PC-9 (cell line): ENCODE measurements at regions of chr3 and their contacts with region 1.

Region 1: DNA sequence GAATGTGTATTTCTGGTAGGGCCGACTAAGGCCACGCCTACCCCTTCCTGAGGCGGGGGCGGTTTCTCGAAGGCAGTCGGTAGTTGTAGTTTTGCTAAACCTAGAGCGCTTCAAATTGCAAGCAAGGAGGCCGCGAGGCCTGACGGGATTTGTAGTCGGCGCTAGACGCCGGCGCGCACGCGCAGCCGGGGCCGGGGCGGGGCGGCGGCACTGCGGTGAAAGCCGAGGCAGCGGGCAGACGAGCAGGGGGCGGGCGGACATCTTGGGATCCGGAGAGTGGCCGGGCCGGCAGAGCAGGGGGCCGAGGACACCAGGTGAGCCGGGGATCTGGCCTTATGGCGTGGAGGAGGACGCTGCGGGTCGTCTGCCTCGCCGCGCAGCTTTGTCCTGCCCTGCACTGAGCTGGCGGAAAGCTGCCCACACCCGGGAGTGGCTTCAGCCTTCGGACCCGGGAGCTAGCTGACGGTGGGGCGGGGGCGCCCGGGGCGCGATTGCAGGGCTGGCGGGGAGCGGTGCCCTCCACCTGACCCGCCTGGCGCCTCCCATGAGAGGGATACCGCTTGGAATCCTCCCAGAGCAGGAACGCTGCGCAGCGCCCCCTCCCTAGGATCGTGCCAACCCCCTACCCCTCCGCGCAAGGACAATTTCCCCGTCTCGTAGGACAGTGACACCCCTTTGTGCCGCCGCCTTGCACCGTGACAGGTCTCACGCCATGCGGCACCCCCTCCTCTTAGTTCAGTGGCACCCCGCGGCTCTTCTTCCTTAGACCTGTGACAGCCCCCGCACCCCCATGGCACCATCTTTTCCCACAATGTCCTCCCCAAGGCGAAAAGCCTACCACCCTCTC is at the start of gene AP2M1:
- DNase-seq: peak; percentile 99 to 100
- H3K4me3 ChIP-seq: peak within 1 kb of the TSS; percentile 91
- H3K27ac ChIP-seq: peak within 1 kb of the TSS; percentile 32
- H3K4me1 ChIP-seq: peaks cover 20% of the 10 kb centered on the region
- H3K27me3 ChIP-seq: no peaks in the 10 kb centered on the region
- CTCF ChIP-seq: no peak
- total RNA-seq, gene AP2M1: 586 and 606 TPM in 2 replicates

Region 2: GRCh38 chr3:184135149-184135910 is 39.5 kb before region 1 on chr3 and contains the start of gene EIF2B5:
- CTCF ChIA-PET with region 1: interaction called, 5 read pairs
- POLR2A ChIA-PET with region 1: no interaction called
- intact Hi-C with region 1: loop called (anchors 1 kb)
- DNase-seq: peak; percentile 87 to 88
- H3K4me3 ChIP-seq: peak within 1 kb of the TSS; percentile 80
- H3K27ac ChIP-seq: peak within 1 kb of the TSS; percentile 79
- H3K4me1 ChIP-seq: peaks cover 25% of the 10 kb centered on the region
- H3K27me3 ChIP-seq: no peaks in the 10 kb centered on the region
- CTCF ChIP-seq: peak; percentile 48
- total RNA-seq, gene EIF2B5: 45.7 and 54.1 TPM in 2 replicates

Region 3: DNA sequence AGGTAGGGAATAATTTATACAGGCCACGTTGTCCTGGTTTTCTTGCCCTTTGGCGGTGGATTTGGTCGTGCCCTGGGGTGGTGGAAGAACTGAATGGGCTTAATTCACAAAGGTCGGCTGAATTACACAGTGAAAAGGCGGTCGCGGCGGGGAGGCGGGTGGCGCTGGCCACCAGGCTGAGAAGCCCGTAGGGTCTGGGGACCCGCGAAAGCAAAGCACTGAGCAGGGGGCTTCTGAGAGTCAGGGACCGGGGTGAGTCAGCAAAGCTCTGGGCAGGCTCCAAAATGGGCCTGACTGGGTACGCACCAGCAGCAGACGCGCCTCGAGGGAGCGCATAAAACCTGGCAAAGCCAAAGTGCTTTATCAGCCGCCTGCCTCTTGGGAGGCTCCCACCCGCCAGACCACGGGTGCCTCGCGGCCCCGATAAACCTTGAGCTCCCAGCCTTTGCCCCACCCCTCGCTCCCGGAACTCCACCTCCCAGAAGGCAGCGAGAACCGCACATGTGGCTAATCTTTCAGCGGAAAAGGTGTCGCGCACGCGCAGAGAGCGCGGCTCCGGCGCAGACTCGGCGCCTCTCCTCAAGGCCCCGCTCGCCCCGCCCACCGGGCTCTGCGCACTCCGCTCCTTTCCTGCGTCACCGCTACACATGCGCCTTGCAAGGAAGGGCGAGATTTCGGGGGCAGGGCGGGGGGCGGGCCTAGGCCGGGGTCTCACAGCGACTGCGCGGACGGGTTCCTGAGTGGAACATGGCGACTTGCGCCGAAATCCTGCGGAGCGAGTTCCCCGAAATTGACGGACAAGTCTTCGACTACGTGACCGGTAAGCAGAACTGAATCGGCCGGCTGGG is 10.8 kb after region 1 on chr3 and contains the start of gene ABCF3:
- CTCF ChIA-PET with region 1: interaction called, 4 read pairs
- POLR2A ChIA-PET with region 1: interaction called, 9 read pairs
- intact Hi-C with region 1: loop called (anchors 1 kb)
- DNase-seq: peak; percentile 97 to 100
- H3K4me3 ChIP-seq: peak within 1 kb of the TSS; percentile 78
- H3K27ac ChIP-seq: peak within 1 kb of the TSS; percentile 74
- H3K4me1 ChIP-seq: peaks cover 17% of the 10 kb centered on the region
- H3K27me3 ChIP-seq: no peaks in the 10 kb centered on the region
- CTCF ChIP-seq: no peak
- total RNA-seq, gene ABCF3: 98.8 and 137 TPM in 2 replicates

Region 4: DNA sequence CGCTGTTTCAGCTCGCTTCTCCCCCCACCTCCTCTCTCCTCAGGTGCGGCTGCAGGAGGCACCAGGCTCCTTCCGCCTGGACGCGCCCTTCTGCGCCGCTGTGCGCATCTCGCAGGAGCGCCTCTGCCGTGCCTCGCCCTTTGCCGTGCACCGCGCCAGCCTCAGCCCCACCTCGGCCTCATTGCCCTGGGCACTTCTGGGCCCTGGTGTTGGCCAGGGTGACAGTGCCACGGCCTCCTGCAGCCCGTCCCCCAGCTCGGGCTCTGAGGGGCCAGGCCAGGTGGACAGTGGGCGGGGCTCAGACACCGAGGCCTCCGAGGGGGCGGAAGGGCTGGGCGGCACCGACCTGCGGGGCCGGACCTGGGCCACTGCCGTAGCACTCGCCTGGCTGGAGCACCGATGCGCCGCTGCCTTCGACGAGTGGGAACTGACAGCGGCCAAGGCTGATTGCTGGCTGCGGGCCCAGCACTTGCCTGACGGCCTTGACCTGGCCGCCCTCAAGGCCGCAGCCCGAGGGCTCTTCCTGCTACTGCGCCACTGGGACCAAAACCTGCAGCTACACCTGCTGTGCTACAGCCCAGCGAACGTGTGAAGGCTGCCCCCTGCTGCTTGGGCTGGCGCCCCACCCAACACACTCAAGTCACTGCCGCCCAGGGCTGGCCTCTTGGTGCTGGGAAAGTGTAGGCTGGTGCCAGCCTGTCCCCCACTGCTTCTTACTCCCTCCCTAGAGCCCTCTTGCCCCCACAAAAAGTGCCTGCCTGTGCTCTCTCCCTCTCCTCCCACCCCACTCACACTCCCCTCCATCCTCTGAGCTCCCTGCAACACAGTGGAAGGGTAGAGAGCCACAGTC is 66.8 kb after region 1 on chr3:
- CTCF ChIA-PET with region 1: interaction called, 6 read pairs
- POLR2A ChIA-PET with region 1: interaction called, 18 read pairs
- intact Hi-C with region 1: loop called (anchors 2 kb)
- DNase-seq: peak; percentile 72 to 94
- H3K4me3 ChIP-seq: no peak overlapping the region; the same call in 1 of the 2 replicates
- H3K27ac ChIP-seq: no peak overlapping the region
- H3K4me1 ChIP-seq: 0 out of 2 replicates have a peak, but pooled peaks cover 7% of the 10 kb centered on the region
- H3K27me3 ChIP-seq: no peaks in the 10 kb centered on the region
- CTCF ChIP-seq: peak; percentile 70

Region 5: DNA sequence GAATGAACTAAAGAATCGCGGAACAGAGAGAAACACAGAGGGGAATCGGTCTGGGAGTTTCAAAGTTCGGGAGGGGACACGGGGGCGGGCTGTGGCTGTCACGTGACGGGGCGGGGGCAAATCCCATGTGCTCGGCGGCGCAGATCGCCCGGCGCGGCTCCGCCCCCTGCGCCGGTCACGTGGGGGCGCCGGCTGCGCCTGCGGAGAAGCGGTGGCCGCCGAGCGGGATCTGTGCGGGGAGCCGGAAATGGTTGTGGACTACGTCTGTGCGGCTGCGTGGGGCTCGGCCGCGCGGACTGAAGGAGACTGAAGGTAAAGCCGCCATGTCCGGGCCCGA is 139.5 kb after region 1 on chr3 and contains the start of gene EIF4G1:
- CTCF ChIA-PET with region 1: no interaction called
- POLR2A ChIA-PET with region 1: interaction called, 7 read pairs
- intact Hi-C with region 1: loop called (anchors 1 kb)
- DNase-seq: peak; percentile 82 to 98
- H3K4me3 ChIP-seq: peak within 1 kb of the TSS; percentile 63
- H3K27ac ChIP-seq: peak within 1 kb of the TSS; percentile 84
- H3K4me1 ChIP-seq: peaks cover 43% of the 10 kb centered on the region
- H3K27me3 ChIP-seq: no peaks in the 10 kb centered on the region
- CTCF ChIP-seq: no peak
- total RNA-seq, gene EIF4G1: 657 and 721 TPM in 2 replicates